ENCODE measurements at regions of chr2 and their contacts with region 1.

Region 1: GRCh38 chr2:9843229-9844035 is at the start of gene TAF1B:
- DNase-seq: peak; percentile 93
- ATAC-seq: peak; percentile 80
- H3K4me3 Mint-ChIP-seq: peak within 1 kb of the TSS; percentile 89
- H3K27ac Mint-ChIP-seq: peak within 1 kb of the TSS; percentile 85
- H3K4me1 Mint-ChIP-seq: peaks cover 37% of the 10 kb centered on the region
- H3K27me3 Mint-ChIP-seq: no peaks in the 10 kb centered on the region
- total RNA-seq, gene TAF1B: 28.7 to 28.8 TPM

Region 2: DNA sequence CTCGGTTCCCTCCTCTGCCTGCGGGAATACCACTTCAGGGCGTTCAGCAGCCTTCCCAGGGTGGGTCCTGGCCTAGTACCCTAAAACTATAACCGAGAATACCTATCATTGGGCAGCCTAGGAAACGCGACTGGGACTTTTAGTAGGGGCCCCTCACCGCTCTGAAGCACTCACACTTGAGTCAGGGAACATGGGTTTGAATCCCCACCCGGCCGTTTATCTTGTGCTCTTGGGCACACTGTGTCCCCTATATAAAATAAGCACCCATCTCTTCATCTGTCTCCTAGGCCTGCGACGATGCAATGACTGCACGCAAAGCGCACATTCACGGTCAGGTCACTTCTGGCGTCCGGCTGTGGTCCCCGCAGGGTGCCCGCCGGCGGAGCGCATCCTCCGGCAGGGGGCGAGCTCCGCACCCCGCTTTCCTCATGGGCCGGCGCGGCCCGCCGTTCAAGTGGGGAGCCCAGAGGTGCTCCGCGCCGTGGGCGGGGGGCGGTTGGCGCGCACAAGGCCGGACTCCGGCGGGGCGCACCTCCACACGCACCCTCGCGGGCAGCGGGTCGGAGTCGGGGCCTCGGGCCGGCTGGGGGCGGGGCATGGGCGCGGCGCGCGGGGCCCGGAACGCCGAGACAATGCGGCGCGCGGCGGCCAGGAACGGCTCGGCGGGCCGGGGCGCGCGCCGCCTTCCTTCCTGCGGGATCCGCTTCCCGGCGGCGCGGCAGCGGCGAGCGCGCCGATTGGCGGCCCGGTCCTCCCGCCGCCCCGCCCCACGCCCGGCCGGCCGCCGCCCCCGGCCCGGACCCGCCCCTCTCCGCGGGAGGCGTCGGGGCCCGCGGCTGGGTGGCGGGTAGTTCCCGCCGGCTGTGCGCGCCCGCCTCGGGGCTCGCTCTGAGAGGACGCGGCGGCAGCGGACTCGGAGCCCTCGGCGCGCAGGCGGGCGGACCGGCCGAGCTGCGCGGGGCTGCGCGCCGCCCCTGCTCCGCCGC is 637.2 kb before region 1 on chr2 and contains the start of gene ASAP2:
- CTCF ChIA-PET with region 1: no interaction called
- POLR2A ChIA-PET with region 1: no interaction called
- intact Hi-C with region 1: loop called in 1 of 2 experiments (anchors 1 kb)
- DNase-seq: peak; percentile 70
- ATAC-seq: peak; percentile 74
- H3K4me3 Mint-ChIP-seq: peak within 1 kb of the TSS; percentile 62
- H3K27ac Mint-ChIP-seq: no peak within 1 kb of the TSS
- H3K4me1 Mint-ChIP-seq: peaks cover 11% of the 10 kb centered on the region
- H3K27me3 Mint-ChIP-seq: peaks cover 43% of the 10 kb centered on the region
- total RNA-seq, gene ASAP2: 0.21 to 0.26 TPM

Region 3: DNA sequence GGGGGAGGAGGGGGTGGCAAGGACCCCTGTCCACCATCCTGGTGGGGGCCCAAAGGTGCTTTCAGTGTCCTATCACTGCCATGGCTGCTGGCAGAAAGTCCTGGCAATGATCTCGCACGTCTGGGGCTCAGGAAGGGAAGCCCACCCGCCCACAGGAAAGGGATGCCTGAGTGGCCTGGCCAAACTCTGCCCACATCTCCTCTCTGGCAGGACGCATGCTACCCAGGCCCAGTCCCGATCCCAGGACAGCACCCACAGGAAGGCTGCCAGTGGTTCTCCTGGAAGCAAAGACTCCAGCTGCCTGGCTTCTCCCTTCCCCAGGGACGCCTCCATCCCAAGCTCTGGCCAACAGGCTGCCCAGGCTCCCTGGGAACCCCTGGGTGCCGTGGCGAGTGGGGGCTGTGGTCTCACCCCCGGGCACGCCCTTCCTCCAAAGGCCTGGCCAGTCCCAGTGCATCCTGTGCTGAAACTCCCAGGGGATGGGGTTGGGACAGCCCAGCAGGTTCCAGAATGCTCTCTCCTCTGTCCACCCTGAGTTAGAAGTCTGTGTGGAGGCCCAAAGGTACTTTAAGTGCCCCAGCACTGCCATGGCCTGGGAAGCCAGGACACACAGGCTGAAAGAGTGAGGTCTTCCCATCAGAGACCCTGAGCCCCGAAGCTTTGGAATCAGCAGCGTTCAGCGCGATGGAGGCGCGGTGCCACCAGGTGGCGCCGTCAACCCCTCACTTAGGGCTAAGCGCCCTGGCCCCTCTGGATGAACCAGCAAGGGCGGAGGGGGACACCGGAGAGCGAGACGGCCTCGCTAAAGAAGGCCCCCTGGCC is 29.9 kb before region 1 on chr2:
- CTCF ChIA-PET with region 1: interaction called, 30 read pairs
- POLR2A ChIA-PET with region 1: no interaction called
- intact Hi-C with region 1: no loop called
- DNase-seq: peak; percentile 84
- ATAC-seq: peak; percentile 90
- H3K4me3 Mint-ChIP-seq: no peak overlapping the region
- H3K27ac Mint-ChIP-seq: no peak overlapping the region
- H3K4me1 Mint-ChIP-seq: peaks cover 9% of the 10 kb centered on the region
- H3K27me3 Mint-ChIP-seq: peaks cover 3% of the 10 kb centered on the region

Region 4: DNA sequence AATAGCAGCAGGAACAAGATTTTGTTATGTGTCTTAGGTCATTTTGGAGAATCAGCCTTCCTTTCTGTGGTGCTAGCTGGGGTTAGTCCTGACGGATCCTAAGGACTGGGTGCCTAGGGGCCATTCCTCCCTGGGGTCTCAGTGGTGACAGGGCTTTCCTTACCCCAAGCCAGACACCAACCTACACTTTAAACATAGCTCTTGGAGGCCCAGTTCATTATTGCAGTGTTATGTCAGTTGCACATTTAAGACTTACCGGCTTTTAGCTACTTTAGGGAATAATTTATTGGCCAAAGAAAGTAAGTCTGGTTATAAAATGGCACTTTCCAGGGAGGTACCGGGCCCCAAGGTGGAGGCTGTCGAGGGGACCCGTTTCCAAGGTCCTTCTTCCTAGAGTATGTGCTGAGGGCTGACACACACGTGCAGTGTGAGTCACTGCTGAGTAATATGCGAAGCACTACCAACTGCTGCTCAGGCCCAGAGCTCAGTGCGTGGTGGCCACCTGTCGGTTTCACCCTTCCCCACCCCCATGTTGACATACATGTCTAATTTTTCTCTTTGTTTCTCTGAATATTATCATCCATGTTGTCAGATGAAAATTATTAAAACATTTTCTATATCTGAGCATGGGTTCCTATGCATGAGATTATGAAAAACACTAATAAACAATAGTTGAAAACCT is 71.1 kb after region 1 on chr2:
- CTCF ChIA-PET with region 1: no interaction called
- POLR2A ChIA-PET with region 1: no interaction called
- intact Hi-C with region 1: loop called in 1 of 2 experiments (anchors 1 kb)
- DNase-seq: peak; percentile 79
- ATAC-seq: peak; percentile 100
- H3K4me3 Mint-ChIP-seq: no peak overlapping the region
- H3K27ac Mint-ChIP-seq: no peak overlapping the region
- H3K4me1 Mint-ChIP-seq: peaks cover 10% of the 10 kb centered on the region
- H3K27me3 Mint-ChIP-seq: no peaks in the 10 kb centered on the region

Region 5: GRCh38 chr2:10043906-10044601 is 200.6 kb after region 1 on chr2:
- CTCF ChIA-PET with region 1: interaction called, 5 read pairs
- POLR2A ChIA-PET with region 1: interaction called, 3 read pairs
- intact Hi-C with region 1: loop called in 1 of 2 experiments (anchors 1 kb)
- DNase-seq: peak; percentile 95
- ATAC-seq: peak; percentile 81
- H3K4me3 Mint-ChIP-seq: peak overlapping the region; percentile 66
- H3K27ac Mint-ChIP-seq: peak overlapping the region; percentile 78
- H3K4me1 Mint-ChIP-seq: peaks cover 12% of the 10 kb centered on the region
- H3K27me3 Mint-ChIP-seq: peaks cover 3% of the 10 kb centered on the region

Region 6: DNA sequence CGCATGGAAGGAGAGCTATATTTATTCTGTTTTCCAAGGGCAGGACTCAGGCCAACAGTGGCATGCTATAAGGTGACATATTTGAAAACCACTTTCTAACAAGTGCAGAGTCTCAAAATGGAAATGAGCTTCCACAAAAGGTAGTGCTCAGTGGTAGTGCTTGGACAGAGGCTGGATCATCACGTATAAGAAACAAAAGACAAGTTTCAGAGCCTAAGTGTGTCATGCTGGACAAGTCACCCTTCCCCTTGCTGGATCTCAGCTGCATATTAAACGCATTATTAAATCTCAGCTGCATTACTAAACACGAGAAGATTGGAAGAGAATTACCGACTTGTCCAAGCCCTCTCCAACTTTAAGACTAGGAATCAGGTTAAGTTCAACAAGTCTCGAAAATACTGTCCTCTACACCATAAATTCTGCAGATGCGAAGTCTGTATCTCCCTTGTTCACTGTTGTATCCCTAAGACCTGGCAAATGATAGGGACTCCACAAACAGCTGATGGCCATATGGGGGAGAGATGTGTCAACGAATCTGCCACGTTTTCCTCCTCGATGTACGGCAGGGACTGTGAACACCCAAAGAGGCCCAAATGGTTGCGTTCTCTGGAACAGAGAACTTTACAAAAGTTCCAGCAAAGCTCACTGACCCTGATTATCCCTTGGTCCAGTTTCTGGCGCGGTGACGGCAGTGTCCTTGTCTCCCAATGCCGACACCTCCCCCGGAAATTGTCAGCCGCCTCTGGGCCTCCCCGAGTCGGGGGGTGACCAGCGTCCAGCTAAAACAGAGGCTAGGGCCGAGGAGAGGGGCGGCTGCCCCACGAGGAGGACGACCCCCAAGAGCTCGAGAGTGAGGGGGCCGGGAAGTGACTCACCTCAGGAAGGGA is 845.7 kb after region 1 on chr2:
- CTCF ChIA-PET with region 1: no interaction called
- POLR2A ChIA-PET with region 1: no interaction called
- intact Hi-C with region 1: loop called in 1 of 2 experiments (anchors 5 kb)
- DNase-seq: no peak
- ATAC-seq: peak; percentile 19
- H3K4me3 Mint-ChIP-seq: no peak overlapping the region
- H3K27ac Mint-ChIP-seq: no peak overlapping the region
- H3K4me1 Mint-ChIP-seq: peaks cover 7% of the 10 kb centered on the region
- H3K27me3 Mint-ChIP-seq: no peaks in the 10 kb centered on the region